ENCODE measurements at regions of chr9 and their contacts with region 1.

Region 1: DNA sequence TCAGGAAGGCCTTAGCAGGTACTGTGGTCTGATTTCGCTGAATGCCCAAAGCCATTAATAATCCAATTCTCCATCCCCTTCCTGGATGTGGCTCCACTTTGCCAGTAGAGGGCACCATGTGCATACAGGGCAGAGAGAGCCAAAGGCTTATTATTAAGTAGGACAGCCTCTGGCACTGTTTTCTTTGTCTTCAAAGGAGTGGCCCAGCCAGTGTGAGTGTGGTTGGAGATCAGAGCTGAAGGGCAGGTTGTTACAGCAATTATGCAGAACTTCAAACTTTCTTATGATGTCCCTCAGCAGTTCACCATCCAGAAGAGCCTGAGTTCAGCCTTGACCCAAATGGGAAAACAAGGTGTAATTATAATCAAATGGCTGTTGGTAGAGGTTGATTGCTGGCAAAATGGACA is 38.6 kb upstream of the CEMIP2 start:
- DNase-seq: peak; percentile 57
- ATAC-seq: peak; percentile 100
- H3K4me3 Mint-ChIP-seq: no peak overlapping the region
- H3K27ac Mint-ChIP-seq: peak overlapping the region; percentile 58
- H3K4me1 Mint-ChIP-seq: peaks cover 17% of the 10 kb centered on the region
- H3K27me3 Mint-ChIP-seq: no peaks in the 10 kb centered on the region
- CTCF ChIP-seq: 0 out of 2 replicates have a peak, but pooled peaks have one; percentile 43

Region 2: GRCh38 chr9:71608825-71609452 is 198.0 kb before region 1 on chr9:
- CTCF ChIA-PET with region 1: no interaction called
- POLR2A ChIA-PET with region 1: no interaction called
- DNase-seq: peak; percentile 19
- ATAC-seq: peak; percentile 68
- H3K4me3 Mint-ChIP-seq: no peak overlapping the region
- H3K27ac Mint-ChIP-seq: peak overlapping the region; percentile 83
- H3K4me1 Mint-ChIP-seq: peaks cover 24% of the 10 kb centered on the region
- H3K27me3 Mint-ChIP-seq: no peaks in the 10 kb centered on the region
- CTCF ChIP-seq: no peak

Region 3: GRCh38 chr9:71796100-71796767 is 10.7 kb before region 1 on chr9:
- CTCF ChIA-PET with region 1: interaction called, 11 read pairs
- POLR2A ChIA-PET with region 1: no interaction called
- DNase-seq: no peak
- ATAC-seq: no peak
- H3K4me3 Mint-ChIP-seq: no peak overlapping the region
- H3K27ac Mint-ChIP-seq: no peak overlapping the region
- H3K4me1 Mint-ChIP-seq: no peaks in the 10 kb centered on the region
- H3K27me3 Mint-ChIP-seq: no peaks in the 10 kb centered on the region
- CTCF ChIP-seq: no peak

Region 4: GRCh38 chr9:71819115-71819739 is 12.3 kb after region 1 on chr9:
- CTCF ChIA-PET with region 1: interaction called, 42 read pairs
- POLR2A ChIA-PET with region 1: no interaction called
- DNase-seq: peak; percentile 23
- ATAC-seq: no peak
- H3K4me3 Mint-ChIP-seq: no peak overlapping the region
- H3K27ac Mint-ChIP-seq: no peak overlapping the region
- H3K4me1 Mint-ChIP-seq: peaks cover 44% of the 10 kb centered on the region
- H3K27me3 Mint-ChIP-seq: no peaks in the 10 kb centered on the region
- CTCF ChIP-seq: peak; percentile 66

Measured in WTC11 (cell line).